CD4-positive, alpha-beta memory T cell (primary cell): ENCODE measurements at regions of chr19 and their contacts with region 1.

Region 1: DNA sequence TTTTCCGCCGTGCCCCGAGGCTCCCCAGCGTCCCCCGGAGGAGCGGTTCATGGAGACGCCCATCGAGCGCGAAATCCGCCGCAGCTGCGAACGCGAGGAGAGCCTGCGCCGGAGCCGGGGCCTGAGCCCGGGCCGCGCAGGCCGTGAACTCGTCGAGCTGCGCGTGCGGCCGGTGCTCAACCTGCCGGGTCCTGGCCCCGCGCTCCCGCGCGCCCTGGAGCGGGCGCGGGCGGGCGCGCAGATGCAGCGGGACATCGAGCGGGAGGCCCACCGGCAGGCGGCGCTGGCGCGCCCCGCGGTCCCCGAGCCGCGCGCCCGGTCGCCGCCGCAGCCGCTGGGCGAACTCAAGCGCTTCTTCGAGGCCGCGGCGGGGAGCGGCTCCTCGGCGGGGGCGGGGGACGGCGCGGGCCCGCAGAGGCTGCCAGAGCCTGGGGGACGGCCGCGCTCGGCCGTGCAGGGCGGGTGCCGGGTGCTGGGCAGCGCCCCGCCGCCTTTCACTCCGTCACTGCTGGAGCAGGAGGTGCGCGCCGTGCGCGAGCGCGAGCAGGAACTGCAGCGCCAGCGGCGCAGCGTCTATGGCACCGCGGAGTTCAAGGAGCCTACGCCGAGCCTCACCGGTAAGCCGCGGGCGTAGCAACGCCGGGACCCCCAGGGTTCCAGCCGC is 807 bp downstream of the MISP3 start:
- DNase-seq: peak; percentile 80 to 88 (median 84)
- H3K4me3 ChIP-seq: peak overlapping the region; percentile 70 to 90
- H3K4me3 Mint-ChIP-seq: peak overlapping the region; percentile 89 to 98 (median 93)
- H3K27ac ChIP-seq: peak overlapping the region; percentile 61
- H3K27ac Mint-ChIP-seq: peak overlapping the region; percentile 70 to 97 (median 88)
- H3K4me1 ChIP-seq: peaks cover 31% of the 10 kb centered on the region
- H3K4me1 Mint-ChIP-seq: peaks cover 7 to 28% (median 15%) of the 10 kb centered on the region in 4 donors
- H3K27me3 ChIP-seq: no peaks in the 10 kb centered on the region
- H3K27me3 Mint-ChIP-seq: no peaks in the 10 kb centered on the region

Region 2: DNA sequence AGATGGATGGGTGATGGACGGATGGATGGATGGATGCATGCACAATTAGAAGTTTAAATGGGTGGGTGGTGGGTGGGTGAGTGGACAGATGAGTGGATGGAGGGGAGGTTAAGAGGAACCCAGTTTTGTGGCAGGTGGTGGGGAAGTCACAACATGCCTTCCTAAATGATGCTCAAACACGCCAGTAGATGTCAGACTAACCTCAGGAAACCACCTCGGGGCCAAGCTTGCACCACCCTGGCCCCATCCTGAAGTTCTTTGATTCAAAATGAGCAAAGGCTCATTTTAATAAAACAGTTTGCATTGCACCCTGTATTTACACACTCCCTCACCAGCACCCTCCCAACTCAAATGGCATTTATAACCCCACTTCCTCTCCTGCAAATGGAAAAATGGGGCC is 475.8 kb before region 1 on chr19:
- CTCF ChIA-PET with region 1: no interaction called
- POLR2A ChIA-PET with region 1: no interaction called
- intact Hi-C with region 1: loop called (anchors 2 kb)
- DNase-seq: peak; percentile 44 to 55 (median 49)
- H3K4me3 ChIP-seq: no peak overlapping the region
- H3K4me3 Mint-ChIP-seq: no peak overlapping the region
- H3K27ac ChIP-seq: no peak overlapping the region
- H3K27ac Mint-ChIP-seq: no peak overlapping the region
- H3K4me1 ChIP-seq: no peaks in the 10 kb centered on the region
- H3K4me1 Mint-ChIP-seq: peaks cover 0 to 2% (median 0%) of the 10 kb centered on the region in 4 donors
- H3K27me3 ChIP-seq: no peaks in the 10 kb centered on the region
- H3K27me3 Mint-ChIP-seq: peaks cover 15 to 16% of the 10 kb centered on the region in 2 donors

Region 3: DNA sequence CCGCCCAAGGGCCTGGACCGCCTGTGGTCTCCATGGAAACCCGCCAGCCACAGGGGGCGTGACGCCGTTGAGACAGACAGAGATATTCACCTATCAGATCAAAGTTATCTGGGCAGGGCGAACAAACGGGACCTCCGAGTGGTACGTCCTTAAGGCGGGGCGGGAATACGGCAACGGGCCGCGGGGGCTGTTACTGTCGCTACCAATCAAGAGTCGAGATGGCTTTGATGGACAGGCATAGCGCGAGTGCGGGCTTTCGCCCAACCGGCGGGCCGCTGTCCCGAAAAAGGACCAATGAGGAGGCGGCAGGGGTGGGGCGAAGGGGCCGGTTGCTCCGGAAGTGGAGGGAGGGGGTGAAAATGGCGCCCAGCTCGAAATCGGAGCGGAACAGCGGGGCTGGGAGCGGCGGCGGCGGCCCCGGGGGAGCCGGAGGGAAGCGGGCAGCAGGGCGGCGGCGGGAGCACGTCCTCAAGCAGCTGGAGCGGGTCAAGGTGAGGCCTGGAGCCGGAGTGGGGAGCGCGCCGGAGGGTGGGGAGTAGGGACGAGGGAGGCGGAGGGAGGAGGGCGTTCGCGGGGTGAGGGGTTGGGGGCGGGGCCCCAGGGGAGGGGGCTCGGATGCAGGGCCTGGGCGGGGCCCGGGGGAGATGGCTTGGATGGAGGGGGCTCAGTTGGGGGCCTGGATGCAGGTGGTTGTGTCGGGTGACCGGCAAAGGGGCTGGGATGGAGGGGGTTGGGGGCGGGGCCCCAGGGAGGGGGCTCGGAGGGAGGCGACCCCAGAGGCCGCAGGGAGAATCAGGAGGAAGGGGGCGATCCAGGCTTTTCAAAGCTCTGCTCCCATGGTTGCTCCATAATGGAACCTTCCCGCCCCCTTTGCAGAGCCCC is 121.0 kb before region 1 on chr19 and contains the start of gene DCAF15:
- CTCF ChIA-PET with region 1: interaction called, 5 read pairs
- POLR2A ChIA-PET with region 1: interaction called, 3 read pairs
- intact Hi-C with region 1: loop called (anchors 10 kb)
- DNase-seq: peak; percentile 98 to 100 (median 99)
- H3K4me3 ChIP-seq: peak within 1 kb of the TSS; percentile 43 to 71
- H3K4me3 Mint-ChIP-seq: peak within 1 kb of the TSS; percentile 88 to 96 (median 92)
- H3K27ac ChIP-seq: peak within 1 kb of the TSS; percentile 80
- H3K27ac Mint-ChIP-seq: peak within 1 kb of the TSS; percentile 86 to 99 (median 96)
- H3K4me1 ChIP-seq: peaks cover 22% of the 10 kb centered on the region
- H3K4me1 Mint-ChIP-seq: peaks cover 12 to 28% (median 17%) of the 10 kb centered on the region in 4 donors
- H3K27me3 ChIP-seq: no peaks in the 10 kb centered on the region
- H3K27me3 Mint-ChIP-seq: no peaks in the 10 kb centered on the region
- total RNA-seq, gene DCAF15: 92.9 to 96.7 TPM

Region 4: DNA sequence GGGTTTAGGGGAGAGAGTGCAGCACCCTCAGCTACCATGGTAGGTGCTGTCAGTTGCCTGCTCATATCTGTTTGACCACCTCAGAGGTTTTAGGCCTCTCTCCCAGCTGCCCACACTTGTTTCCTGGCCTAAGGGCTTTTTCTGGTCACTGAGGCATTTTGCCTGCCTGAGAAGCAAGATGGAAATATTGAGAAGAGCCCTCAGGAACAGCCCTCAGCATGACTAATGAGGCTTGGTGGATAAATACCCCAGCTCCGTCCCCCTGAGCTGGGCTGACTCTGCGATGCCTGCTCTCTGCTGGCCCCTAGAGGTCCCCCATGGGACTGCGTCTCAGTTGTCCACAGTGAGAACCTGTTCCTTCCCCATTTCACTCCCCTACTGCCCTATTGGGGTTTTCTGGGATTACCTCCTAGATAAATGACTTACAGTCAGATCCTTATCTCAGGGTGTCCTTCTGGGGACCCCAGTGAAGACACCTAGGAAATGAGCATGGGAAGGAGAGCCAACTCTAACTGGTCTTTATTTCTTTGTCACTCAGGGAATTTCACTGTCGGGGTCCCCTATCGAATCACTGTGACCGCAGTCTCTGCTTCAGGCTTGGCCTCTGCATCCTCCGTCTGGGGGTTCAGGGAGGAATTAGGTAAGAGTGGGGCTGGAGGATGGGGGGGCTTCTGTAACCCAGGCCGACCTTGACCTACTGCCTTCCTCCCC is 24.8 kb before region 1 on chr19:
- CTCF ChIA-PET with region 1: interaction called, 10 read pairs
- POLR2A ChIA-PET with region 1: interaction called, 7 read pairs
- intact Hi-C with region 1: no loop called
- DNase-seq: peak; percentile 63 to 73 (median 68)
- H3K4me3 ChIP-seq: no peak overlapping the region
- H3K4me3 Mint-ChIP-seq: no peak overlapping the region
- H3K27ac ChIP-seq: peak overlapping the region; percentile 39
- H3K27ac Mint-ChIP-seq: peak overlapping the region; percentile 26 to 85 (median 42)
- H3K4me1 ChIP-seq: peaks cover 5% of the 10 kb centered on the region
- H3K4me1 Mint-ChIP-seq: peaks cover 2 to 5% (median 3%) of the 10 kb centered on the region in 4 donors
- H3K27me3 ChIP-seq: no peaks in the 10 kb centered on the region
- H3K27me3 Mint-ChIP-seq: no peaks in the 10 kb centered on the region

Region 5: DNA sequence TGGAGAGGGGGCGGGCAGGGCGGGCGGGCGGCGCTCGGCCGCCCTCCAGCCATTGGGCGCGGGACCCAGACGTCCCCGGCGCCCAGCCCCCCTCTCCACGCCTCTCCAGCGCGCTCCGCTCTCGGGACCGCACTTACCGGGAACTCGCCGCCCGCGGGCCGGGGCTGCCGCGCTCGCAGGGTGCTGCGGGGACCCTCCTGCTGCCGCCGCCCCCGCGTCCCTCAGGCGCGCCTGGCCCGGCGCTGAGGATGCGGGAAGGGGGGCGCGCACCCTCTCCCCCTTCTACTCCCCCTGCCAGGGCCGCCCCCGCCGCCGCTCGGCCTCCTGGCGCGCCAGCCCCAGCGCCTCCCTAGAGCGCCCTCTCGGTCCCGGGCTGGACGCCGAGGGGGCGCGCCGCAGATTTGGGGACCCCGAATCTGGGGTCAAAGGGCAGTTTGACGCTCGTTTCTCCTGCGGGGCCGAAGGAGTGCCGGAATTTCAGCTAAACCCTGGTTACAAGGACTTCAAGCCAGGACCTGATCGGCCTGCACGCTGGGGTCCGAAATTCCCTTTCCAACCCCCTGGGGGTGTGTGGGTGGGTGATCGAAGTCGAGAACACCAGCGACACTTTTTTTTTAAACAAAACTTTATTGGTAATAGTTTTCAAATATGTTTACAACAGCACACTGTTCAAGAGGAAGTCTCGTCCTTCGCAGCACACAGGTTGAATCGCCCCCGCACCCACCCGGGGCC is 17.9 kb after region 1 on chr19:
- CTCF ChIA-PET with region 1: interaction called, 13 read pairs
- POLR2A ChIA-PET with region 1: interaction called, 3 read pairs
- intact Hi-C with region 1: loop called (anchors 2 kb)
- DNase-seq: peak; percentile 79 to 84 (median 80)
- H3K4me3 ChIP-seq: peak overlapping the region; percentile 86 to 88
- H3K4me3 Mint-ChIP-seq: peak overlapping the region; percentile 99 to 100 (median 100)
- H3K27ac ChIP-seq: peak overlapping the region; percentile 72
- H3K27ac Mint-ChIP-seq: peak overlapping the region; percentile 95 to 100 (median 99)
- H3K4me1 ChIP-seq: peaks cover 14% of the 10 kb centered on the region
- H3K4me1 Mint-ChIP-seq: peaks cover 10 to 28% (median 21%) of the 10 kb centered on the region in 4 donors
- H3K27me3 ChIP-seq: no peaks in the 10 kb centered on the region
- H3K27me3 Mint-ChIP-seq: peaks cover 0 to 2% of the 10 kb centered on the region in 2 donors